ENCODE measurements at regions of chr19 and their contacts with region 1.

Region 1: GRCh38 chr19:46040952-46041500 is at the start of gene IGFL4:
- DNase-seq: peak; percentile 35
- total RNA-seq, gene IGFL4: not detected

Region 2: DNA sequence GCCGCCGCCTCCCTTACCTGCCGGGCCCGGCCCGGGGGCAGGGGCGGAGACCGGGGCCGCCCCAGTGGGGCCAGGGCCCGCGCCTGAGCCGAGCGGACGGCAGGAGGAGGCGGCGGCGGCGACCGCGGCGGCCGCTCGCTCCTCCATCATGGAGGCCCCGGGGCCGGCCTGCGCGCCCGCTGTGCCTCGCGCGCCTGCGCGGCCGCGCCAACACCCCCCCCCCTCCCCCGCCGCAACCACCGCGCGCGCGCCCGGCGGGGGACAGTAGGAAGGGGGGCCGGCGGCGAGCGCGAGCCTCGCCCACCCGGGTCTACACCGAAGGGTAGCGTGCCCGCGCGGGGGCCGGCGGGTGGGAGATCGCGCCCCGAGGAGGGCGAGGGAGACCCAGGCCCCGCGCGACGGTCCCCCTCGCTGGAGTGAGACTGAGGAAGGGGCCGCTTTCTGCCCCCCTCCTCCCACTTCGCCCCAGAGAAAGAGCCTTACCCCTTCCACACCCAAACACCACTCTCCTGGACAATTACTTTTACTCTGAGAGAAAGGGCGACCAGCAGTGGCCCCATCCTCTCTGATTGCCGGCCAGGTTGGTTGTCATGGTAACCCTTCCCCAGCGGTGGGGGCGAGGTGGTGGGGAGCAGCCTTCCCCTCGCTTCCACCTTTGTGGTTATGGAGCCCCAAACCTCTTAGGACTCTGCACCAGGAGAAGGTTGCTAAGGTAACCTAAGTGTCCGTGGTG is 705.4 kb after region 1 on chr19 and contains the start of gene STRN4:
- intact Hi-C with region 1: loop called in 1 of 2 experiments (anchors 5 kb)
- DNase-seq: no peak
- total RNA-seq, gene STRN4: 58.6 to 71.8 TPM